Activated CD4-positive, alpha-beta T cell treated with anti-CD3 and anti-CD28 coated beads, Interleukin-2, amount 10 ng/mL, durations not matched to agents 24 days and 14 days (primary cell): ENCODE measurements at regions of chr9 and their contacts with region 1.

Region 1: GRCh38 chr9:32378993-32379729 is 5.3 kb upstream of the ACO1 start:
- DNase-seq: peak; percentile 89
- H3K4me3 Mint-ChIP-seq: peak overlapping the region; percentile 4
- H3K27ac Mint-ChIP-seq: no peak overlapping the region
- H3K4me1 Mint-ChIP-seq: peaks cover 14% of the 10 kb centered on the region
- H3K27me3 Mint-ChIP-seq: peaks cover 32% of the 10 kb centered on the region

Region 2: GRCh38 chr9:32171339-32171738 is 207.8 kb before region 1 on chr9:
- intact Hi-C with region 1: no loop called
- DNase-seq: no peak
- H3K4me3 Mint-ChIP-seq: no peak overlapping the region
- H3K27ac Mint-ChIP-seq: no peak overlapping the region
- H3K4me1 Mint-ChIP-seq: no peaks in the 10 kb centered on the region
- H3K27me3 Mint-ChIP-seq: no peaks in the 10 kb centered on the region

Region 3: GRCh38 chr9:32395490-32396216 is 16.5 kb after region 1 on chr9:
- intact Hi-C with region 1: no loop called
- DNase-seq: no peak
- H3K4me3 Mint-ChIP-seq: no peak overlapping the region
- H3K27ac Mint-ChIP-seq: no peak overlapping the region
- H3K4me1 Mint-ChIP-seq: peaks cover 1% of the 10 kb centered on the region
- H3K27me3 Mint-ChIP-seq: no peaks in the 10 kb centered on the region

Region 4: DNA sequence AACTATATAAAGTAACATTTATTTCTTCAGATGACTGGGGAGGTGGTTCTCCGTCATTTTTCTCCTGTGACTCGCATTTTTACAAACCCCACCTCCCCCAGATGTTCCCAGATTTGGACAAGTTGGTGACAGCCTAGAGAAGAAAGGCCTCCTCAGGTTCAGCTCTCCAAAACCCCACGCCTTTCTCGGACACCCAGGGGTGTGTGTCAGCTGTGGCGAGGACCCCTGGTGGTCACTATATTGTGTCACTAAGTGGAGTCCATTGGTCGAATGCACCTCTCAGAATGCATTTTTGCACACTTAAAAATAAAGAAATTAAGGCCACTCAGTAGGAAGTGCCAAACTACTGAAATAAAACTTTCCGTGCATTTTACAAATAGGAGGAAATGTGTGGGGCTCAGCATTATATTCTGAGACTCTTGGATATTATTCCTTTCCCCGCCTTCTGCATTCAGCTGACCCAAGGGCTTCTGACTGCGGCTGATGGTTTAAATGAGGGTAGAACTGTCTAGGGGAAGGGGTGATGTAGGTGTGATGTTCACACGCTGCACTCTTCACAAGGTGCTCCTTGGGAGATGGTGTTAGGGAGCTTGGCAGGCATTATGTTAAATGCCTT is 52.9 kb after region 1 on chr9:
- intact Hi-C with region 1: loop called (anchors 1 kb)
- DNase-seq: peak; percentile 72
- H3K4me3 Mint-ChIP-seq: no peak overlapping the region
- H3K27ac Mint-ChIP-seq: no peak overlapping the region
- H3K4me1 Mint-ChIP-seq: peaks cover 4% of the 10 kb centered on the region
- H3K27me3 Mint-ChIP-seq: no peaks in the 10 kb centered on the region

Region 5: GRCh38 chr9:32526041-32526706 is 147.0 kb after region 1 on chr9 and contains the start of gene RIGI:
- intact Hi-C with region 1: loop called (anchors 1 kb)
- DNase-seq: peak; percentile 96
- H3K4me3 Mint-ChIP-seq: peak within 1 kb of the TSS; percentile 94
- H3K27ac Mint-ChIP-seq: peak within 1 kb of the TSS; percentile 80
- H3K4me1 Mint-ChIP-seq: peaks cover 39% of the 10 kb centered on the region
- H3K27me3 Mint-ChIP-seq: no peaks in the 10 kb centered on the region
- total RNA-seq, gene RIGI: 5.5 and 6.1 TPM in 2 replicates

Region 6: DNA sequence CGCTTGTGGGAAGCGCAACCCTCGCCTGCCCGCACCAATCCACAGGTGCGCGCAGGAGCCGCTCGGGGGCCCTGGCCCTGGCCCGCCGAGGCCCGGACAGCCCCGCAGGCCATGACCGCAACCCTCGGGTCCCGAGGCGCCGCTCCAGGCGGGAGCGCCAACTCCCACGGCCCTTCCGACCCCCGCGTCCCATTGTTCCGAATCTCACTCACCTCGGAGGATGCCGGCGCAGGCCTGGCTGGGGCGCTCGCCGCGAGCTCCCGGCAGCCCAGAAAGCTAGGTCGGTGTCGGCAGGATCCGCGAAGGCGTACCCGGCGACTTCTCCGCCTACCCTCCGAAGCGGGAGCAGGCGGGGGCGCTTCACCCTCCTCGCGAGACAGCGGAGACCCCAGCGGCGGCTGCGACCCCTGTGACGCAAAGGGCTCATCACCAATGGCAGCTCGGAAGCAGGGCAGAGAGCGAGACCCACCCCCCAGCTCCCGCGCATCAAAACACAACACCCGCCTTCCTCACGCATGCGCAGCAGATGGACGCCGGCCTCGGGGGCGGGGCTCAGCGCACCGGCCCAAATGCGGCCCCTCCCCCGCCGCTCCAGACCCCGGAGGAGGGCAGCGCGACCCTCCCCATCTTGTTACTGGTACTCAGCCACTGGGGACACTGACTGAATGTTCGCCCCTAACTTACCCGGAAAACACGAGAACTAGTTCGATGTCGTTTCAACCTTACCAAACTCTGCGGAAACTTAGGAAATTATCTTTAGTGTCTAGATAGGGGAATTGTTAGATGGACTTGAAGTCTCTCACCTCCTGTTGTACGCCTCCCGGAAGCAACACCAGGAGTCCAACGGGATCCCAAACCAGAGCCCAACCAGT is 171.6 kb after region 1 on chr9:
- intact Hi-C with region 1: loop called (anchors 1 kb)
- DNase-seq: peak; percentile 98
- H3K4me3 Mint-ChIP-seq: peak overlapping the region; percentile 99
- H3K27ac Mint-ChIP-seq: peak overlapping the region; percentile 100
- H3K4me1 Mint-ChIP-seq: peaks cover 40% of the 10 kb centered on the region
- H3K27me3 Mint-ChIP-seq: no peaks in the 10 kb centered on the region

Region 7: GRCh38 chr9:32571969-32572899 is 193.1 kb after region 1 on chr9:
- intact Hi-C with region 1: loop called (anchors 1 kb)
- DNase-seq: peak; percentile 91
- H3K4me3 Mint-ChIP-seq: peak overlapping the region; percentile 99
- H3K27ac Mint-ChIP-seq: peak overlapping the region; percentile 98
- H3K4me1 Mint-ChIP-seq: peaks cover 22% of the 10 kb centered on the region
- H3K27me3 Mint-ChIP-seq: peaks cover 2% of the 10 kb centered on the region

Region 8: DNA sequence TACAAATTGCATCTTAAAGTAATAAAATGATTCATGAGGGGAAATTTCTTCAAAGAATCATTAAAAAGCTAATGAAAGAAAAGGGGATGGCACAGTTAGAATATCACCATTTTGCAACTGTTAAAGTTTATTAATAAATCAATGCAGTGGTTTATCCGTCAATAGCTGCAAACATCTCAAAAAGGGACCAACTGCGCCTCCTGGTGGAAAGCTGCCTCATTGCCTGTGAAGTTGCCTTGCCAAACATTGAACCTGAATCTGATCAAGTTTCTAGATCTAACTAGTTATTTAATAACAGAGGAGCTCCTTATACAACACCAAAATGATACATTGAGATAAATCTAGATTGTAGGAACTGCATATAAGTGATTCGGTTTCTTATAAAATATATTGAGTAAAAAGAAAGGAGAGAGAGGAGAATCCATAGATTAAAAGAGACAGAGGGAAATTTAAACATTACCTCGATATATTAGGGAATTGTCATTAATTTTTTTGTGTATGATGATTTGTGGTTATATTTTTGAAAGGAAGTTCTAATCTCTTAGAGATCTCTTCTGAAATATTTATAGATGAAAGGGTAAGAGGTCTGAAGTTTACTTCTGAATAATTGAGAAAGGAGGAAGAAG is 200.7 kb after region 1 on chr9:
- intact Hi-C with region 1: loop called (anchors 1 kb)
- DNase-seq: peak; percentile 93
- H3K4me3 Mint-ChIP-seq: no peak overlapping the region
- H3K27ac Mint-ChIP-seq: no peak overlapping the region
- H3K4me1 Mint-ChIP-seq: peaks cover 7% of the 10 kb centered on the region
- H3K27me3 Mint-ChIP-seq: peaks cover 31% of the 10 kb centered on the region

Region 9: DNA sequence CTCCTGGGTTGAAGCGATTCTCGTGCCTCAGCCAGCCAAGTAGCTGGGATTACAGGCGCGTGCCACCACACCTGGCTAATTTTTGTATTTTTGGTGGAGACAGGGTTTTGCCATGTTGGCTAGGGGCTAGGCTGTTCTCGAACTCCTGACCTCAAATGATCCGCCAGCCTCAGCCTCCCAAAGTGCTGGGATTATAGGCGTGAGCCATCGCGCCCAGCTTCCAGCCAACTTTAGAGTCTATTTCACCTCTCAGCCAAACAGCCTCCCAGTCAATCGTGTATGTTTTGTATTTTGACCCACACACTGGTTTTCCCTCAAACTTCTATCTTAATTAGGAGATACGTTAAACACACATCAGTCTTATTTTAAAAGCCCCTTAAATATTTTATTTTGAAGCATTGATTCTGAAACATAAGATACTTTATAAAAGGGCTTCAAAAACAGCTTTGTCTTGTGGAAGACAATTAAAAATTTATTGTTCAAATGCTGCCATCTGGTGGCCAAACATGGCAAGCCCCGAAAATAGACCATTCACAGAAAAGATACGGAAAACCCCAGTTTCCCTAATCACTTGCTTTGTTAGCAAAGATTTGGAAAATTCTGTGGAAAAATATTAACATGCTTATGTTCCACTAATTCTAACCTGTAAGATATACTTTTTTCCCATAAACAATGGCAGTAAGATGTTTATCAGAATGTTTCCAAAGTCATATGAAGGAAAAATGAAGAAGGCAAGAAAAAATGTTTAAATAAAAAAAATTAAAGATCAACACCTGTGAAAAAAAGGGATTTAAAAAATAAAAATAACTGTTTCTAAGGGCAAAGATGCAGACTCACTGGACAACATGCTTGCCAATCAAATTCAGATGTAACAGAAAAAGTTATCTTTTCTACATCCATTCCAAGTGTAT is 589.2 kb after region 1 on chr9:
- intact Hi-C with region 1: loop called (anchors 1 kb)
- DNase-seq: peak; percentile 86
- H3K4me3 Mint-ChIP-seq: no peak overlapping the region
- H3K27ac Mint-ChIP-seq: no peak overlapping the region
- H3K4me1 Mint-ChIP-seq: peaks cover 2% of the 10 kb centered on the region
- H3K27me3 Mint-ChIP-seq: no peaks in the 10 kb centered on the region